Activated CD4-positive, alpha-beta memory T cell treated with anti-CD3 and anti-CD28 coated beads for 36 hours (primary cell): ENCODE measurements at regions of chr5 and their contacts with region 1.

Region 1: DNA sequence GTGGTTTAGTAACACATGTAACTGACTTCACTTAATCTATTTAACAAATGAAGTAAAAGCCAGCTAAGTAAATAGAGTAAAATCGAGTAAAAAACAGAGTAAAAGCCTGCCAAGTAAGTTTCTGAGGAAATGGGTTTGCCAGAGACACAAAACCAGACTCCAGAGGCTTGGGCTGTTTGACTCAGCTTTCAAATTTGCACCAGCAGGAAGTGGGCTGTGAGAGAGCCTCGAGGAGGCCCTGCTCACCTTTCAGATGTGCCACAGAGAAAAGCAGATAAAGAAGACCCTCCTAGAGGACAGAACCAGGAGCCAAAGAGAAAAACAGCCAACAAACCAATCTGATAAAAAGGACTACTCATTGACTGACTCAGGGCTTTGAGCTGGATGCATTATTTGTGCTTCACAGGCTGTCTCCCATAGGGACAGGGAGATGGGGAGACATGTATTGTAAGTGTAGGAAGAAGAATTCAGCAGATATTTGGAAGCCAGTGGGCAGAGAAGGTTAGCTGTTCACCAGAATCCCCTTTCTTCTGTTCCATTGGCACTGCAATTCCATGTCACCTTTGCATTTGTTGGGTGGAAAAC is 14.4 kb upstream of the AMACR start:
- DNase-seq: peak; percentile 74
- H3K4me3 Mint-ChIP-seq: no peak overlapping the region
- H3K27ac Mint-ChIP-seq: peak overlapping the region; percentile 74
- H3K4me1 Mint-ChIP-seq: peaks cover 23% of the 10 kb centered on the region
- H3K27me3 Mint-ChIP-seq: no peaks in the 10 kb centered on the region

Region 2: DNA sequence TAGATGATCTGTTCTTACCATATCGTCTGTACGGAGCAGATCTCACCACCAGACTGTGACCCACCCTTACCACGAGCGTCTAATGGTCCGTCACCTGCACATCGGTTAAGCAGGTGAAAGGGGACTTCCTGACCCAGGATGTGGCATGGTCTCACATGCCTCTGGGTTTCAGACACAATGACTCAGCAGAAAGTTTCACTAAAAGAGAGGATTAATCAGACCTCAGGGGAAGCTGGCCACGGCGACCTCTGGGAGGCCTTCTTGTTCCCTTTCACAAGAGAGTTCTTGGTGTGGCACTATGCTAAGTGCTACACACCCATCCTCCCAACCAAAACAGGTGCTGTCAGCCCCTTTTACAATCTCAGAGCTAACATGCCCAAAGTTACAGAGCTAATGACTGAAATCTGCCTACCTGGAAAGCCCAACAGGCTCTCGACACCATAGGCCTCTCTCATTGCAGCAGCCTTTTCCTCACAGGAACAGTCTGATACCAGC is 172.1 kb before region 1 on chr5:
- CTCF ChIA-PET with region 1: no interaction called
- POLR2A ChIA-PET with region 1: no interaction called
- intact Hi-C with region 1: loop called (anchors 10 kb)
- DNase-seq: peak; percentile 73
- H3K4me3 Mint-ChIP-seq: no peak overlapping the region
- H3K27ac Mint-ChIP-seq: no peak overlapping the region
- H3K4me1 Mint-ChIP-seq: peaks cover 10% of the 10 kb centered on the region
- H3K27me3 Mint-ChIP-seq: peaks cover 2% of the 10 kb centered on the region

Region 3: GRCh38 chr5:33997331-33997983 is 24.8 kb before region 1 on chr5:
- CTCF ChIA-PET with region 1: interaction called, 9 read pairs
- POLR2A ChIA-PET with region 1: no interaction called
- intact Hi-C with region 1: loop called (anchors 2 kb)
- DNase-seq: peak; percentile 33
- H3K4me3 Mint-ChIP-seq: no peak overlapping the region
- H3K27ac Mint-ChIP-seq: no peak overlapping the region
- H3K4me1 Mint-ChIP-seq: peaks cover 12% of the 10 kb centered on the region
- H3K27me3 Mint-ChIP-seq: no peaks in the 10 kb centered on the region

Region 4: DNA sequence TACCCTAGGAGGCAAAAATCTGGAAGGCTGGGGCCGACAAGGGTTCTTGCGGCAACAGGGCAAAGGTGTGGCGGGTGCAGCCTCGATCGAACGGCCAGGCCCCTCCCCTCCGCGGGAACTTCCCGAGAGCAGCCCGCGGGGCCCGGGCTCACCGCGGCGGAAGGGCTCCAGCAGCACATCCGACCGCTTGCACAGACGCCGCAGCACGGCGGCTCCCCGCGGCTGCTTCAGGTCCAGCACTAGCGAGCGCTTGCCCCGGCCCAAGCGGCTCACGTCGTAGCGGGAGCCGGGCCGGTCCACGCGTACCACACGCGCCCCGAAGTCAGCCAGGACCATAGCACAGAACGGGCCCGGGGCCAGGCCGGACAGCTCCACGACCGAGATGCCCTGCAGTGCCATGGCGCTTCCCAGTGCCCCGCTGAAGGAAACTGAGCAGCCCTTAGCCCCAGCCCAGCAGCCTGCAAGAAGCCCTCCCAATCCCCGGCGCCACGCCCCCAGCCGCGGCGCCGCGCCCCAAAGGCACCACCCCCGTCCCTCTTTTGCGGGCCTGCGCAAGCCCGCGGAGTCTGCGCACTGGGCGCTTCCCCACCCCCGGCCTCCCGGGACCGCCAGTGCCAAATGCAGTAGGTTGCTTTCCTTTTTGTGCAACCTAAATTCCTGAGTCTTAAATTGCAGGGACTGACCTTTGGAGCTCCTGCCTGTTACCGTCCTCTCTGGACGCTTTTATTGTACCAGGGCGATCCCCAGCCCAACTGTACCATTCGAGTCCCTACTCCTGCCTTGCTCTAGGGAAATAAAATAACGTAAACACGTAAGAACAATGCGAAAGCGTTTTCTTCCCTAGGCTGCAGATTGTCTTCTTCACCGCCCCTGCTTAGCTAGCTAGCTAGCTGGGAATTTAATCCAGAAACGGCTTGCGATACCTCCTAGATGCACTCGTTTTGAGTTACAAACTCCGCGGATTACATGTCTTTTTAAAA is 14.3 kb before region 1 on chr5 and contains the start of gene AMACR:
- CTCF ChIA-PET with region 1: interaction called, 4 read pairs
- POLR2A ChIA-PET with region 1: interaction called, 5 read pairs
- intact Hi-C with region 1: loop called (anchors 1 kb)
- DNase-seq: peak; percentile 91
- H3K4me3 Mint-ChIP-seq: peak within 1 kb of the TSS; percentile 91
- H3K27ac Mint-ChIP-seq: peak within 1 kb of the TSS; percentile 93
- H3K4me1 Mint-ChIP-seq: peaks cover 32% of the 10 kb centered on the region
- H3K27me3 Mint-ChIP-seq: no peaks in the 10 kb centered on the region
- total RNA-seq, gene AMACR: 11.5 TPM